HEK293T (cell line): ENCODE measurements at regions of chr2 and their contacts with region 1.

Region 1: GRCh38 chr2:171878481-171878993 is 15.5 kb downstream of the SLC25A12 start:
- DNase-seq: peak; percentile 31

Region 2: DNA sequence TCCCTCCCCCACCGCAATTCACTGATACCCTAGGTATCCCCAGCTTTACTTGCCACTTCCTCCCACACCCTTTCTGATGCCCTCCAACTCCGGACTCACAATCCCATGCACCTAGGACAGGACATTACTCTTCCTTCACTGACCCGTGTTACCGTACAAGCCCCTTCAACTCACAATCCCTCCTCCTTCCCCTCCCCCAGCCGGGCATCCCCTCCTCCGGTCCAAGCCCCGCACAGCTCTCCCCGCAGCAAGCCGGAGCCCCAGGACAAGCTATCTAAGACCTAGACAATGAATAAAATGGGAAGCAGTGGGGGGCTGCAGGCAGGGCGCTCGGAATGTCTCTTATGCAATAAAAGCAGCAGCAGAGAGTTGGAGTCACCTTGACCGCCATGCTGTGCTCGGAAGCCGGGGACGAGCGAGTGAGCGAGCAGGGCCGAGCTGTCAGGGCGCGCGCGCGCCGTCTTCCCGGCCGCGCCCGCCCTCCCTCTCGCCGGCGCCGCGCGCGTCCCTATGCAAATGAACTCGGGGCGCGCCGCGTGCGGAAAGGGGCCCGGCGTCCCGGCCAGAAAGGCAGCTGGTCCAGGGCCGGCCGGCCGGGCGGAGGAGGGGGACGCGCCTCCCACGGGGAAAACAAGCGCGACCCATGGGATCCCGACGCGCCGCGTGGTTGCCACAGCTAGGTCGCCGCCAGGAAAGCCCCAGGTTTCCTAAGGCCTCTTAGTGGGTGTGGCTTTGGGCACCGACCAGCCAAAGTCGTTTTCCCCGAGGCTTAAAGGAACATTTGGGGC is 15.5 kb after region 1 on chr2 and contains the start of gene SLC25A12:
- CTCF ChIA-PET with region 1: no interaction called
- POLR2A ChIA-PET with region 1: interaction called, 13 read pairs
- DNase-seq: peak; percentile 90